WTC11 (cell line): ENCODE measurements at regions of chr22 and their contacts with region 1.

Region 1: GRCh38 chr22:37594237-37594636 is 14.3 kb upstream of the LGALS2 start:
- DNase-seq: no peak
- ATAC-seq: no peak
- H3K4me3 Mint-ChIP-seq: no peak overlapping the region
- H3K27ac Mint-ChIP-seq: no peak overlapping the region
- H3K4me1 Mint-ChIP-seq: peaks cover 2% of the 10 kb centered on the region; the same call in 1 of the 2 replicates
- H3K27me3 Mint-ChIP-seq: peaks cover 2% of the 10 kb centered on the region; the same call in 1 of the 2 replicates
- CTCF ChIP-seq: no peak

Region 2: DNA sequence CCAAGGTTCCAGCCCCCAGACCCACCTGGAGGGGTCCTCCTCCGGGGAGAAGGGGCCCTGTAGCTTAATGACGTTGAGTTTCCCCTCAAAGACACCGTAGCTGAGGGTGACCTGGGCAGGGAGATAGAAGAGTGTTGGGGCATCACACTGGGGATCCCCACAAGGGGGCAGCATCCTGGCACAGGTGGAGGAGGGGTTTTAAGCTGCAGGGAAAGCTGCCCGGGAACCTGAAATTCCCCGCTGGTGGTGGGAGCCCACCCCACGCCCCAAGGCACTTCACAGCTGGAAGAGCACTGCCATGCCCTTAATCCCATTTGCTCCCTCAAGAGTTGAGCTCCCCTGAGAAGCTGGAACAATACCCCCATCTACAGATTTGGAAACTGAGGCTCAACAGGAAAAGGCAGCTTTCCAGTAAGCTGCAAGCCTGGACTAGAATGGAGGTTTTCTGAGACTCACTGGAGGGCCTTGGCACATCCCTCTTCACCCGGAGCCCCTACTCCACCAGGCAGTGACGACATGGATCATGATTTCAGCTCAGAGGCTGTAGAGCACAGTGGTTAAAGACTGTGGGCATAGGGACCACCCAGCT is 121.7 kb before region 1 on chr22:
- CTCF ChIA-PET with region 1: interaction called, 41 read pairs
- POLR2A ChIA-PET with region 1: interaction called, 4 read pairs
- DNase-seq: peak; percentile 79
- ATAC-seq: peak; percentile 81
- H3K4me3 Mint-ChIP-seq: no peak overlapping the region
- H3K27ac Mint-ChIP-seq: no peak overlapping the region
- H3K4me1 Mint-ChIP-seq: 0 out of 2 replicates have a peak, but pooled peaks cover 3% of the 10 kb centered on the region
- H3K27me3 Mint-ChIP-seq: no peaks in the 10 kb centered on the region; the same call in 1 of the 2 replicates
- CTCF ChIP-seq: peak; percentile 66

Region 3: DNA sequence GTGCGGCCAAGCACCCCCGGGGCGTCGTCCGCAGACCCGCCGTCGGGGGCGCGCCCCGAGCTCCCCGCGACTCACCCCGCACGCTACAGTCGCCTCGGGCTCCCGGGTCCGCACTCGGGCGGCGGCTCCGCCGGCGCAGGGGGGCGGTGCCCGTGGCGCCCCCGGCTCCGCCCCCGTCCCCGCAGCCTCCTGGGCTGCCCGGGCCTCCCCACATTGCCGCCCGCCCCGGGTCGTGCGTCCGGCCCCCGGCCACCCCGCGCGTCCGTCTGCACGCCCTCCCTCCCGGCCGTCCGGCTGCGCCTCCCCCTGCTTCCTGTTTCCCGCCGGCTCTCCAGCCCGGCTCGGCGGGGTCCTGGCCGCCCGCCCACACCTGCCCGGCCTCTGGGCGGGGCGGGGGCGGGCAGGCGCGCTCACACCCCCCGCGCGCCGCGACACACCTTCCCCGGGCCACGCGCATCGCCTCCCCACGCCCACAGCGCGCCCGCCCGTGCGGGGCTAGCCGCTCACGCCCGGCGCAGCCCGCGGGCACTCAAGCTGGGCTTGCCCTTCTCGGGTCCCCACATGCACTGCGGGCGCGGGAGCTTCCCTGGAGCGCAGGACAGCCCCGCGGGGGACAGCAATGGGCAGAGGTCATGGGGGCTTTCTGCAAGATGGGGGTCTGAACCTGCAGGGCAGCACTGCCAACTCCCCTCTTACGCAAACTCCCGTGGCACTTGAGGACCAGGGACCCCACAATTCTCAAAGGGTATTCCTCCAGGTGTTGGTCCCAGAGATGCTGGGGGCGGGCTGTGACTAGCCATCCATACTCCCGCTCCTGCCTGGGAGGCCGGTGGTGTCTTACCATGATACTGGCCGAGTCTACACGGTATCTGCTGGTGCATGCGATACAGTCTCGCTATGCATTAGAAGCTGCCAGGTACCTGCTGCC is 74.7 kb before region 1 on chr22 and contains the start of gene CARD10:
- CTCF ChIA-PET with region 1: interaction called, 15 read pairs
- POLR2A ChIA-PET with region 1: no interaction called
- DNase-seq: peak; percentile 46
- ATAC-seq: peak; percentile 51
- H3K4me3 Mint-ChIP-seq: peak within 1 kb of the TSS; percentile 79
- H3K27ac Mint-ChIP-seq: no peak within 1 kb of the TSS
- H3K4me1 Mint-ChIP-seq: peaks cover 11% of the 10 kb centered on the region
- H3K27me3 Mint-ChIP-seq: peaks cover 34% of the 10 kb centered on the region
- CTCF ChIP-seq: no peak
- total RNA-seq, gene CARD10: 14.6 to 17.5 TPM (median 16.0 TPM) in 3 replicates

Region 4: DNA sequence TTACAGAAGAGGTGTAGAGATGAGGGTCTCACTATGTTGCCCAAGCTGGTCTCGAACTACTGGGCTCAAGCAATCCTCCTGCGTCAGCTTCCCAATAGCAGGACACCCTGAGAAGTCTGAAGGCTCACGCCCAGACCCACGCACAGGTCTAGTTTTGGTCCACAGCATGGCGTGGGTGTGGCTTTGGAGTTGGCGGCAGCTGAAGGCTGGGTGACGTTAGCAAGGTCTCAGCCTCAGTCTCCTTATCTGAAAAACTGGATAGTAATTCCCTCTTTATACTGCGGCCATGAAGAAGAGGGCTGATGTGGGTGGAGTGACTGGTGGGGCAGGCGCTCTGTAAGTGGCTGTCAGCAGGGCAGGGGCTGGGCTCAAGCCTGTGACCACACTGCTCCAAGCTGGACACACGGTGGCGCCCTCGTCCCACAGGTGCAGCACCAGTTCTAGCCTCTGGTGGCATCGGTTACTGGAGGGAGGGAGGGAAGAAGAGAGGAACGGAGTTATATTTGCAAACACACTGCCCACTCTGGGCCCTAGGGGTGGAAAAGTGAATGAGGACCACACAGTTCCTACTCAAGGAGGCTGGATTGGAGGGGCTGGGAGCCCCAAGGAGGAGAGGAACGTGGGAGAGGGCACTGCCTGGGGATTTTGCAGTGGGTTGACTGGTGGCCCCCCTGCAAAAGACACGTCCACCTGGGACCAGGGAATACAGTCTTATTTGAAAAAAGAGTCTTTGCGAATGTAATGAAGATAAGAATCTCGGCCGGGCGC is 55.5 kb before region 1 on chr22:
- CTCF ChIA-PET with region 1: interaction called, 86 read pairs
- POLR2A ChIA-PET with region 1: interaction called, 5 read pairs
- DNase-seq: peak; percentile 95
- ATAC-seq: peak; percentile 100
- H3K4me3 Mint-ChIP-seq: no peak overlapping the region
- H3K27ac Mint-ChIP-seq: no peak overlapping the region
- H3K4me1 Mint-ChIP-seq: peaks cover 12% of the 10 kb centered on the region
- H3K27me3 Mint-ChIP-seq: no peaks in the 10 kb centered on the region; the same call in 1 of the 2 replicates
- CTCF ChIP-seq: peak; percentile 81

Region 5: GRCh38 chr22:37552524-37553163 is 41.6 kb before region 1 on chr22:
- CTCF ChIA-PET with region 1: interaction called, 14 read pairs
- POLR2A ChIA-PET with region 1: no interaction called
- DNase-seq: peak; percentile 67
- ATAC-seq: peak; percentile 72
- H3K4me3 Mint-ChIP-seq: no peak overlapping the region
- H3K27ac Mint-ChIP-seq: peak overlapping the region; percentile 19; the same call in 1 of the 2 replicates
- H3K4me1 Mint-ChIP-seq: peaks cover 42% of the 10 kb centered on the region
- H3K27me3 Mint-ChIP-seq: peaks cover 30% of the 10 kb centered on the region
- CTCF ChIP-seq: no peak

Region 6: DNA sequence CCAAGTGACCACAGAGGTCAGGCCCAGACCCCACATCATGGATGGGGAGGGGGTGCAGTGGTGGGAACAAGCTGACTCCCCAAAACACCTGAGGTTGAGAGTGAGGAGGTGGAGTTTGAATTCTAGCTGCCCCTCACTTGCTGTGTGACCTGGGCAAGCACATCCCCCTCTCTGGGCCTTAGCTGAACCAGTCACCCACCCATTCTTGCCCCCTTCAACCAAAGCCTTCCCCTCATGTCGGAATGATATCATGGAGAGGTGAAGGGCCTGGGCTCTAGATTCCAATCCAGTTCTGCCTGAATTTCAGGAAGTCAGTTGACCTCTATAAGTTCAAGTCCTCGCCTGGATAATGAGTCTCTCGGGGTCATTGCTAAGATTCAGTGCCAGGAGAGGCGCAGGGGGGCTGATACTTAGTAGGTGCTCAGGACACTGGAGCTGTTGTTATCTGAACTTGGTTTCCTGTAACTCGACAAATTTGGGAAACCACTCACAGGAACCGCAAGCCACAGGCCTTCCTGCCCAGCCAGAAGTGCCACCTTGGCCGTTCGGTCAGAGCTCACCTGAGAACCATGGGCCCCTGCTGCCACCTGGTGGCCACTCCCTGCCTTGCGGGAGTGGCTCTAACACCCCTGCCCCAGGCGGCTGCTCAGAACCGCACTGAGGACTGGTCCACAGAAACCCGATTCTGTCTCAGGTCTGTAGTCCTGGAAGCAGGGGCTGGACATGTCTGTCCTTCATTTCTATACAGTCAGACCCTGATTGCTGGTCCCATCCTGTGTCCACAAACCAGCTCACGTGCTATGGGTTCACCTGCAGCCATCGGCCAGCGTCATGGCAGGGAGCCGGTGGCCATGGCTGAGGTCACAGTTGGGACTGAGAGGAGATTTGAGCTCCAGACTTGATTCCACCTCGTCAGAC is 27.1 kb before region 1 on chr22:
- CTCF ChIA-PET with region 1: interaction called, 146 read pairs
- POLR2A ChIA-PET with region 1: interaction called, 3 read pairs
- DNase-seq: peak; percentile 92
- ATAC-seq: peak; percentile 81
- H3K4me3 Mint-ChIP-seq: no peak overlapping the region
- H3K27ac Mint-ChIP-seq: no peak overlapping the region
- H3K4me1 Mint-ChIP-seq: peaks cover 46% of the 10 kb centered on the region
- H3K27me3 Mint-ChIP-seq: peaks cover 10% of the 10 kb centered on the region
- CTCF ChIP-seq: peak; percentile 90

Region 7: GRCh38 chr22:37581504-37581903 is 12.7 kb before region 1 on chr22:
- CTCF ChIA-PET with region 1: interaction called, 22 read pairs
- POLR2A ChIA-PET with region 1: no interaction called
- DNase-seq: no peak
- ATAC-seq: no peak
- H3K4me3 Mint-ChIP-seq: no peak overlapping the region
- H3K27ac Mint-ChIP-seq: no peak overlapping the region
- H3K4me1 Mint-ChIP-seq: peaks cover 4% of the 10 kb centered on the region
- H3K27me3 Mint-ChIP-seq: no peaks in the 10 kb centered on the region; the same call in 1 of the 2 replicates
- CTCF ChIP-seq: no peak

Region 8: DNA sequence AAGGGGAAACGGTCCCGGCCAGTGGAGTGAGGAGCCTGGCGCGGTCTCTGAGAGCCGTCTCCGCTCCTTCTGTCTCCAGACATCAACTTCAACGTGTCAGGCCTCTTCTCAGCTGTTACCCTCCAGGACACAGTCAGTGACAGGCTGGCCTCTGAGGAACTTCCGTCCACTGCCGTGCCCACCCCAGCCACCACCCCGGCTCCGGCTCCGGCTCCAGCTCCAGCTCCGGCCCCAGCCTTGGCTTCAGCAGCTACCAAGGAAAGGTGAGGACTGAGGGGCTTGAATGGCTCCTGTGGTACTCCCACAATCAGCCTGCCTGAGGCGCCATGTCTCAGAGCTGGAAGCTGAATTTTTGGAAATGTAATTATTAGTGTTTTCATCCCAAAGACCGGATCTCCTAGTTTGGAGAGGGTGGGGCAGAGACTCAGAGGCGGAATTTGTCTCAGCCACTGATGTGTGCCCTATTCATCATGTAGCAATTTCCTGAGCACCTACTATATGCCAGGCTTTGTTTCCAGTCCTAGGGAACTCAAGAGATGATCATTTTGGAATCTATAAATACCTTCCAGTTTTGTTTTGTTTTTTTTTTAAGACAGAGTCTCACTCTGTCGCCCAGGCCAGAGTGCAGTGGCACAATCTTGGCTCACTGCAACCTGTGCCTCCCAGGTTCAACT is 56.4 kb after region 1 on chr22:
- CTCF ChIA-PET with region 1: no interaction called
- POLR2A ChIA-PET with region 1: no interaction called
- DNase-seq: no peak
- ATAC-seq: no peak
- H3K4me3 Mint-ChIP-seq: no peak overlapping the region
- H3K27ac Mint-ChIP-seq: no peak overlapping the region
- H3K4me1 Mint-ChIP-seq: no peaks in the 10 kb centered on the region
- H3K27me3 Mint-ChIP-seq: no peaks in the 10 kb centered on the region
- CTCF ChIP-seq: no peak

Region 9: GRCh38 chr22:37764622-37765021 is 170.4 kb after region 1 on chr22:
- CTCF ChIA-PET with region 1: no interaction called
- POLR2A ChIA-PET with region 1: no interaction called
- DNase-seq: no peak
- ATAC-seq: no peak
- H3K4me3 Mint-ChIP-seq: no peak overlapping the region
- H3K27ac Mint-ChIP-seq: no peak overlapping the region; the same call in 1 of the 2 replicates
- H3K4me1 Mint-ChIP-seq: no peaks in the 10 kb centered on the region
- H3K27me3 Mint-ChIP-seq: peaks cover 4% of the 10 kb centered on the region; the same call in 1 of the 2 replicates
- CTCF ChIP-seq: no peak

Region 10: DNA sequence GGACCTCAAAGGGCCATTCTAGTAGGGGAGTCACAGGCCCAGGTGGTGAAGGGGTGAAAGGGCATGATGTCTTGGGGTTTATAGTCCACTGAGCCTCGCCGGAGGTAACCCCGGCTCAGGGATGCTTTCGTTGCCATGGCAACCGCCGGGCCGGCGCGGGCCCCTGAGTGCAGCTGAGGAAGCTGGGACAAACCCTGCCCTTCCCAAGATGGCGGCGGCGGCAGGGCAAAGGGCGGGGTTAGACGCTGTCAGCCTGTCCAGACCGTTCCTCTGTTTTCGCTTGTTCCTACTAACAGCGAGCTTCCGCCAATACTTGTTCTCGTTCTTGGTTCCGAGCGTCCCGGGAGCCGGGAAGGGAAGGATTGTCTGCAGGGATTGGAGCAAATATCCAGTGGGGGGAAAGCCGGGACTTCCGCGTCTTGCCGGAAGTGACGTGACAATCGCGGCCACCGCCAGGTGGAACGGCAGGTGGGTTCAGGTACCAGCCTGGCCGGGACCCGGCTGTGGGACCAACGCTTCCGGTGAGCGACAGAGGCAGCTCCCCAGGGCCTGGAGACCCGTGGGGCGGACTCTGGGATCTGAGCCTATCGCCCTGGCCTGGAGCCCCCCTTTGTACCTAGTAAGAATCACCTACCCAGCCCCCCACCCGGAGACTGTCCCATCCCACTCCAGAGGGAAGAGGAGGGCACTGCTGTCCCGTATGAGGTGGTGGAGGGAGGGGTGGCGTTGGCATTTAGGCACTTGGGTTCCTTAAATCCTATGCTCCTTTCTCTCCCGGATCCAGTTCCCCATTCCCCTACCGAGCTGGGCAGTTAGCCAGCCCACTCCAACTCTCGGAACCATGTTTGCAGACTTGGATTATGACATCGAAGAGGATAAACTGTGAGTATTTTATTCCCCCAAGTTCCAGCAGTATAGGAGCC is 463.0 kb after region 1 on chr22 and contains the start of gene PICK1:
- CTCF ChIA-PET with region 1: no interaction called
- POLR2A ChIA-PET with region 1: no interaction called
- DNase-seq: peak; percentile 95
- ATAC-seq: peak; percentile 78
- H3K4me3 Mint-ChIP-seq: peak within 1 kb of the TSS; percentile 94
- H3K27ac Mint-ChIP-seq: peak within 1 kb of the TSS; percentile 100
- H3K4me1 Mint-ChIP-seq: peaks cover 10% of the 10 kb centered on the region
- H3K27me3 Mint-ChIP-seq: no peaks in the 10 kb centered on the region; the same call in 1 of the 2 replicates
- CTCF ChIP-seq: no peak
- total RNA-seq, gene PICK1: 28.1 to 33.4 TPM (median 28.2 TPM) in 3 replicates

Region 11: GRCh38 chr22:38088629-38089473 is 494.6 kb after region 1 on chr22:
- CTCF ChIA-PET with region 1: no interaction called
- POLR2A ChIA-PET with region 1: no interaction called
- DNase-seq: no peak
- ATAC-seq: peak; percentile 13; the same call in 1 of the 2 replicates
- H3K4me3 Mint-ChIP-seq: no peak overlapping the region
- H3K27ac Mint-ChIP-seq: no peak overlapping the region
- H3K4me1 Mint-ChIP-seq: peaks cover 5% of the 10 kb centered on the region; the same call in 1 of the 2 replicates
- H3K27me3 Mint-ChIP-seq: no peaks in the 10 kb centered on the region
- CTCF ChIP-seq: no peak